ENCODE measurements at regions of chr5 and their contacts with region 1.

Region 1: GRCh38 chr5:133287500-133287899 is 235.7 kb downstream of the HSPA4 start:
- DNase-seq: no peak
- H3K4me3 ChIP-seq: no peak overlapping the region
- H3K27ac ChIP-seq: no peak overlapping the region
- H3K4me1 ChIP-seq: peaks cover 59% of the 10 kb centered on the region
- H3K27me3 ChIP-seq: no peaks in the 10 kb centered on the region
- CTCF ChIP-seq: peak; percentile 44 to 69

Region 2: DNA sequence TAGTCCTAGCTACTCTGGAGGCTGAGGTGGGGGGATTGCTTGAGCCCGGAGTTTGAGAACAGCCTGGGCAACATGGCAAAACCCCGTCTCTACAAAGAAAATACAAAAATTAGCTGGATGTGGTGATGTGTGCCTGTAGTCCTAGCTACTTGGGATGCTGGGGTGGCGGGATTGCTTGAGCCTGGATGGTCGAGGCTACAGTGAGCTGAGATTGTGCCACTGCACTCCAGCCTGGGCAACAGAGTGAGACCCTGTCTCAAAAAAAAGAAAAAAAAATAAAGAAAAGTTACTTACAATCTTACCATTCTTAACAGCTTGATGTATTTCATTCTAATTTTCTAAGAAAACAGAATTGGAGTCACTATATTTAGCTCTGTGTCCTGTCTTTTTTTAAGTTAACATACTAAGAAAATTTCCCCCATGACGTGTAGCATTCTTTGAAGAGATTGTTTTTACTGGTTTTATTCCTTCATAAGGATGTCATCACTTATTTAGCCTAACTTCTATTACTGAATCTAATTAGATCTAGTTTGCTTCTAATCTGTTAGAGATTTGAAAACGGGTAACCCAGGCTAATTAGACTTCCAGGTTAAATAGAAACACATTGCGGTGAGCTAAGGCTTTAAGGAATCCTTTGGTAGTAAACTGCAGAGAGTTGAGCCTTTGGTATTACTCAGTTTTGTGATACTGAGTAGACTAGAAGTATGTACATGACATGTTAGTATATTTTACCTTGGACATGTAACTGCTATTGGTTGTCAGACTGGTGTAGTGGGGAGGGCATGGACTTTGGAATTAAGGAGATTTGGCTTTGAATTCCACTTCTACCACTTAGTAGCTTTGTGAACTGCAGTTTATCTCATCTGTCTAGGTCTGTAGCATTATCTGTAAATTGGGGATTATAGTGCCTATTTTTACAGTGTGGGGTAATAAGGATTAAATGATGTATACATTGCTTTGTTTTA is 211.6 kb before region 1 on chr5:
- CTCF ChIA-PET with region 1: no interaction called
- dilution Hi-C with region 1: no loop called
- in situ Hi-C with region 1: no loop called
- intact Hi-C with region 1: no loop called
- DNase-seq: no peak
- H3K4me3 ChIP-seq: no peak overlapping the region
- H3K27ac ChIP-seq: no peak overlapping the region
- H3K4me1 ChIP-seq: no peaks in the 10 kb centered on the region
- H3K27me3 ChIP-seq: no peaks in the 10 kb centered on the region
- CTCF ChIP-seq: no peak

Region 3: GRCh38 chr5:133225671-133226152 is 61.8 kb before region 1 on chr5:
- CTCF ChIA-PET with region 1: no interaction called
- dilution Hi-C with region 1: no loop called
- in situ Hi-C with region 1: no loop called
- intact Hi-C with region 1: loop called (anchors 5 kb)
- DNase-seq: peak; percentile 48
- H3K4me3 ChIP-seq: no peak overlapping the region
- H3K27ac ChIP-seq: peak overlapping the region; percentile 94
- H3K4me1 ChIP-seq: peaks cover 60% of the 10 kb centered on the region
- H3K27me3 ChIP-seq: no peaks in the 10 kb centered on the region
- CTCF ChIP-seq: no peak

Region 4: DNA sequence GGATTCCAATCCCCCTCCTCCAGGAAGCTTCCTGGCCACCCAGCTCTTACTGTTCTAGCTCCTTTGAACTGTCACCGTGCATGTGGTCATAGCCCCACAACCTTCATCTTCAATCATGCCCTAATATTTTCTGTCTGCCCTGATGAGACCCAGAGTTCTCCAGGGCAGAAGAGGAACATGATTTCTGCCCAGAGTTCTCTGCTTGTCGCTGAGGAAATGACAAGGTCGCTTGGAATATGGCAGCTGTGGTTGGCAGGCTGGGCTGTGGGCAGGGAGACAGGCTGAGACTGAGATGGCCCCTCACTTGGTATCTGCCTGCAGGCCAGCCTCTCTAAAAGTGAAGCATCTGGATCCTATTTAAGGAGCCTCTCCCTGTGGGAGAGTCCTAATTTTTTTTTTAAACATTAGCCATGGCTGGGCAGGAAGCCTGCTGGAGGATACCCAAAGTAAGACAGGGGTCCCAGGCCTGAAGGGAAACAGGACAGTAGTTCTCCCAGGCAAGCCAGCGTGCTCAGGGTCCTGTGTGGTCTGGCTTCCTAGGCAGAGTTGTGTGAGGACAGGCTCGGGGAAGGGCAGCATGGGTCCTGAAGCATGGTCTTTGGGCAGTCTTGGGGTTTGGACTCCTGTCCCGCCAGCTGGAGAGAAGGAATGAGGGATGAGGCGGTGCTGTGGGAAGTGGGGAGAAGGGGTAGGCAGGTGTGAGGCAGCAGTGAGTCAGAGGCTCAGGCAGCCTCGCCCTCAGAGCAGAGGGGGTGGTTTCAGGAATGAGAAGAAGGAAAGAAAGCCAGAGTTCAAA is 82.7 kb after region 1 on chr5:
- CTCF ChIA-PET with region 1: no interaction called
- dilution Hi-C with region 1: no loop called
- in situ Hi-C with region 1: no loop called
- intact Hi-C with region 1: loop called (anchors 5 kb)
- DNase-seq: peak; percentile 73
- H3K4me3 ChIP-seq: no peak overlapping the region
- H3K27ac ChIP-seq: no peak overlapping the region
- H3K4me1 ChIP-seq: peaks cover 32% of the 10 kb centered on the region
- H3K27me3 ChIP-seq: no peaks in the 10 kb centered on the region
- CTCF ChIP-seq: no peak

Measured in mammary epithelial cell (primary cell).